ENCODE measurements at regions of chr5 and their contacts with region 1.

Region 1: GRCh38 chr5:96940586-96940985 is 4.7 kb downstream of the LNPEP start:
- DNase-seq: no peak
- ATAC-seq: no peak
- H3K4me3 Mint-ChIP-seq: peak overlapping the region; percentile 26 to 94 (median 62)
- H3K27ac Mint-ChIP-seq: peak overlapping the region in 8 of 10 donors; percentile 69 to 83 (median 73)
- H3K4me1 Mint-ChIP-seq: peaks cover 43 to 82% (median 73%) of the 10 kb centered on the region in 4 donors
- H3K27me3 Mint-ChIP-seq: no peaks in the 10 kb centered on the region

Region 2: DNA sequence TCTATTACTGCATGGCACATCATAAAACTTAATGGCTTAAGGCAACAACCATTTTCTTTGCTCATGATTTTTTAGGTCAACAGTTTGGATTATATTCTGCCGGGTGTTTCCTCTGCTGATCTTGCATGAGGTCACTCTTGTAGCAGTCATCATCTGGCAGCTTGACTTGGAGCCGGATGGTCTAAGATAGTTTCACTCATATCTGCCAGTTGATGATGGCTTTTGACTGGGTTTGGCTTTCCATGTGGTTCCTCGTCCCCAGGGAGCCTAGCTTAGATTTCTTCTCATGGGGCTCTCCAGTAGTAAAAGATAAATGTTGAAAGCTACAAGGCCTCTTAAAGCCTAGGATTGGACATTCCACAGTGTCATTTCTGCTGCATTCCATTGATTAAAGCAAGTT is 22.7 kb after region 1 on chr5:
- POLR2A ChIA-PET with region 1: interaction called, 30 read pairs
- DNase-seq: no peak
- ATAC-seq: peak; percentile 25 to 26
- H3K4me3 Mint-ChIP-seq: peak overlapping the region; percentile 66 to 89 (median 81)
- H3K27ac Mint-ChIP-seq: peak overlapping the region; percentile 89 to 98 (median 94)
- H3K4me1 Mint-ChIP-seq: peaks cover 23 to 90% (median 68%) of the 10 kb centered on the region in 4 donors
- H3K27me3 Mint-ChIP-seq: no peaks in the 10 kb centered on the region

Measured in naive thymus-derived CD8-positive, alpha-beta T cell (primary cell).